ENCODE measurements at regions of chr12 and their contacts with region 1.

Region 1: DNA sequence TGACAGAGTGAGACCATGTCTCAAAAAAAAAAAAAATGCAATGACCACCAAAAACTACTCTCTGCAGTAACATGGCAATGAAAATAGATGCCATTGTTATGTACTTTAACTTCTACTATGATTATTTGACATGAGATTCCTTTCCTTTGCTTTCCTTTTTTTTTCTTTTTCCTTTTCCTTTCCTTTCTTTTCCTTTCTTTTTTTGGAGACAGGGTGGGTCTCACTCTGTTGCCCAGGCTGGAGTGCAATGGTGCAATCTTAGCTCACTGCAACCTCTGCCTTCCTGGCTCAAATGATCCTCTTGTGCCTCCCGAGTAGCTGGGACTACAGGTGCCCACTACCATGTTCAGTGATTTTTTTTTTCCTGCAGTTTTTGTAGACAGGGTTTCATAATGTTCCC is 24.9 kb upstream of the ETFBKMT start:
- DNase-seq: no peak
- H3K4me3 ChIP-seq: no peak overlapping the region
- H3K27ac ChIP-seq: no peak overlapping the region
- H3K4me1 ChIP-seq: peaks cover 3 to 13% of the 10 kb centered on the region in 2 donors
- H3K27me3 ChIP-seq: no peaks in the 10 kb centered on the region
- CTCF ChIP-seq: no peak
- POLR2A ChIP-seq: no peak

Region 2: GRCh38 chr12:31250179-31250578 is 384.4 kb before region 1 on chr12:
- intact Hi-C with region 1: loop called in 1 of 2 experiments (anchors 5 kb)
- DNase-seq: no peak
- H3K4me3 ChIP-seq: no peak overlapping the region
- H3K27ac ChIP-seq: no peak overlapping the region
- H3K4me1 ChIP-seq: no peaks in the 10 kb centered on the region
- H3K27me3 ChIP-seq: peaks cover 4% of the 10 kb centered on the region
- CTCF ChIP-seq: no peak
- POLR2A ChIP-seq: no peak

Region 3: GRCh38 chr12:31406345-31406744 is 228.3 kb before region 1 on chr12:
- intact Hi-C with region 1: loop called (anchors 2 to 5 kb)
- DNase-seq: no peak
- H3K4me3 ChIP-seq: no peak overlapping the region
- H3K27ac ChIP-seq: no peak overlapping the region
- H3K4me1 ChIP-seq: peaks cover 0 to 3% of the 10 kb centered on the region in 2 donors
- H3K27me3 ChIP-seq: no peaks in the 10 kb centered on the region
- CTCF ChIP-seq: no peak
- POLR2A ChIP-seq: no peak

Measured in adrenal gland (tissue), 19 donors.